ENCODE measurements at regions of chr6 and their contacts with region 1.

Region 1: DNA sequence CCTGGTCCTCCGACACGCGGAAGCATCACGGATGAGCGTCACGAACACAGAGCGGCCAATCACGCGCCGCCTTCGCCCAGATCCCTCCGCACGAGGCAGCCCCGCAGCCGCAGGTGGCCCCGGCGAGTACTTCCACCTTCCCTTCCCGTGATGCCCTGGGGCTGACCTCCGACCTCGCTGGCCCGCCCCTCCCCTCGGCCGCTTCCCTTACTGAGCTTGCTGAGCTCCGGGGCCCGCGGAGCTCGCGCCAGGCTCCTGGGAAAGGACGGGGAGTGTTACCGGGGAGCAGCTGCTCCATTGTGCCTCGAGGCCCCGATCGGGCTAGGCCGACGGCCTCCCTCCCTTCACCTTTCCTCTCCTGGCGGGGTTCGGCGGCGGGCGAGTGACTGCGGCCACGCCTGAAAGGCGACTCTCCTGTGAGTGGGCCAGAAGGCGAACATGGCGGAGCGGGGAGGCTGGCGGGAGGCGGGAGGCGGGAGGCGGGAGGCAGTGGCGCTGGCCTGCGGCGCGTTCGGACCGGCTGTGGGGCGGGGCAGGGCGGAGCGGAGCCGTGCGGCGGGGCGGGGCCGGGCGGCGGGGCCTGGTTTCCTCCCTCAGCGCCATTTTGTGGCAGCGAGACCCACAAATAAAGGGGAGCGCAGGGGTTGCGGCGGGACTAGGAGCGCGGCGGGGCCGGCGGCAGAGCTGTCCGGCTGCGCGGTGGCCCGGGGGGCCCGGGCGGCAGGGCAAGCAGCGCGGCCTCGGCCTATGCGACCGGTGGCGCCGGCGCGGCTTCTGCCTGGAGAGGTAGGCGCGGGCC is at the start of gene WTAP:
- DNase-seq: peak; percentile 98
- H3K4me3 ChIP-seq: peak within 1 kb of the TSS; percentile 96
- H3K4me3 Mint-ChIP-seq: peak within 1 kb of the TSS; percentile 97
- H3K27ac Mint-ChIP-seq: peak within 1 kb of the TSS; percentile 96
- H3K4me1 ChIP-seq: peaks cover 3% of the 10 kb centered on the region; the same call in 1 of the 2 replicates
- H3K4me1 Mint-ChIP-seq: peaks cover 6% of the 10 kb centered on the region
- H3K27me3 ChIP-seq: no peaks in the 10 kb centered on the region
- H3K27me3 Mint-ChIP-seq: no peaks in the 10 kb centered on the region
- CTCF ChIP-seq: no peak
- total RNA-seq, gene WTAP: 109 and 114 TPM in 2 replicates

Region 2: DNA sequence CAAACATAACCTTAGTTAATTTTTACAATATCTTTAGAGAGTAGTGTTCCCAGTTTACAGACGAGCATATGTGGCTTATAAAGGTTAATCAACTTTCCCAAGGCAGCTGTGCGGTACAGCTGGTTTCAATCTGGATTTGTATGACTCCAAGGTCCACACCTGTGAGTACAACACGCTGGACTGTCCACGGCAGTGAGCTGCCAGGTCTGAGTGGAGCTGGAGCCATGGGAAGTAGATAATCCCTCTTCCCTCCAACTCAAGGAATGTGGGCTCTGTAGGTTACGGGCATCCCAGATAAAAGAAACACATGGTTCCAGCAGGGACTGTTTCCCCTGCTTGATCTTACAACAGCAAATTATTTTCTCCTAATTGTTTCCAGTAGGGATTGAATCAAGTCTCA is 136.3 kb before region 1 on chr6:
- CTCF ChIA-PET with region 1: no interaction called
- POLR2A ChIA-PET with region 1: no interaction called
- intact Hi-C with region 1: no loop called
- DNase-seq: no peak
- H3K4me3 ChIP-seq: no peak overlapping the region
- H3K4me3 Mint-ChIP-seq: no peak overlapping the region
- H3K27ac Mint-ChIP-seq: no peak overlapping the region
- H3K4me1 ChIP-seq: no peaks in the 10 kb centered on the region
- H3K4me1 Mint-ChIP-seq: no peaks in the 10 kb centered on the region
- H3K27me3 ChIP-seq: peaks cover 1% of the 10 kb centered on the region
- H3K27me3 Mint-ChIP-seq: peaks cover 18% of the 10 kb centered on the region
- CTCF ChIP-seq: no peak

Region 3: DNA sequence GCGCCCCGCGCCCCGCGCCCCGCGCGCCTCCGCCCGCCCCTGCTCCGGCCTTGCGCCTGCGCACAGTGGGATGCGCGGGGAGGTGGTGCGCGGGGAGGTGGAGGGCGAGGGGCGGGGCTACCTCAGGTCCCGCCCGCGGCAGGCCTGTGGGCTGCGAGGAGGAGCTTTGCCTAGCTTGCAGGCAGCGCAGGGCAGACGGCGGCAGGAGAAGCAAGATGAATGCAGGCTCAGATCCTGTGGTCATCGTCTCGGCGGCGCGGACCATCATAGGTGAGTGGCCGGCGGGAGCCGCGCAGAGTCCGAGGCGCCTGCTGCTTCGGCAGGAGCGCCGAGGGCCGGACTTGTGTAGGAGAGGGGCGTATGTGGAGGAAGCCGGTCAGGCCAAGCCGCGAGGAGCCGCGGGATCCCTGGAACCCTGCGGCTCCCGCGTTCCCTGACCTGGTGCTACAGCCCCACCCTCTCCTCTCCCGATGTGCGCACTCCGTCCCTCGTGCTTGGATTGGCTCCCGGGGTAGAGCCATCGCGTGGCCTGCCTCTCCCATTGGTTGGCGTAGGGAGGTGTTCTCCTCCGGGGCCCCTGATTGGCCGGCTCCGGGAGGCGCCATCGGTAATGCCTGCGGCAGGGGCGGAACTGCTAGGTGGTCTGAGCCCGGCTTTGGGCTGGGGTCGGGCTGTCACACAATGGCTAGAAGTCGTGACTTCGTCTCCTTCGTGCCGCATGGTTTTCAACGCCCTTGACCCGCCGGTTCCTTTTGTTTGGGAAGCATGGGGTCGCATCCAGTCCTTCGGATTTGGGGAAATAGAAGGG is 35.0 kb after region 1 on chr6 and contains the start of gene ACAT2:
- CTCF ChIA-PET with region 1: no interaction called
- POLR2A ChIA-PET with region 1: interaction called, 35 read pairs
- intact Hi-C with region 1: loop called (anchors 1 kb)
- DNase-seq: peak; percentile 96 to 98
- H3K4me3 ChIP-seq: peak within 1 kb of the TSS; percentile 84
- H3K4me3 Mint-ChIP-seq: peak within 1 kb of the TSS; percentile 82
- H3K27ac Mint-ChIP-seq: peak within 1 kb of the TSS; percentile 98
- H3K4me1 ChIP-seq: peaks cover 16% of the 10 kb centered on the region
- H3K4me1 Mint-ChIP-seq: peaks cover 37% of the 10 kb centered on the region
- H3K27me3 ChIP-seq: no peaks in the 10 kb centered on the region
- H3K27me3 Mint-ChIP-seq: no peaks in the 10 kb centered on the region
- CTCF ChIP-seq: no peak
- total RNA-seq, gene ACAT2: 122 and 131 TPM in 2 replicates

Region 4: DNA sequence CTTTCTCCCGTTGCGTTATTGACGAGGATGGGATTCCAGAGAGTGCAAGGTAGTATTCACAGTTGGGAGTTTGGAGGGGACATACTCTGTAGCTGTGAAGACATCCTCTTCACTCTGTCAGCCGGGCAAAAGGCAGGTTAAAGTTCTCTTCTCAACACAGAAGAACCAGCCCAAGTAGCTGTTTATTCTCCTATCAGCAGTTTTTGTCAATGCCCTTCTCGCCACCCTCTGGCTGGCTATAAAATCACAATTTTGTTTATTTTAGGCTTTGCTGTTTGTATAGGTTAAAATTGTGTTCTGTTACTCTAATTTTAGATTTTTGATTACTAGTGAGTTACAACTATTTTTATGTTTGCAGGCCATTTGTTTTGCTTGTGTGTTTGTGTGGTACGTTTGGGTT is 125.8 kb after region 1 on chr6:
- CTCF ChIA-PET with region 1: no interaction called
- POLR2A ChIA-PET with region 1: no interaction called
- intact Hi-C with region 1: no loop called
- DNase-seq: peak in 1 of 2 experiments; percentile 32
- H3K4me3 ChIP-seq: no peak overlapping the region
- H3K4me3 Mint-ChIP-seq: no peak overlapping the region
- H3K27ac Mint-ChIP-seq: no peak overlapping the region
- H3K4me1 ChIP-seq: no peaks in the 10 kb centered on the region
- H3K4me1 Mint-ChIP-seq: no peaks in the 10 kb centered on the region
- H3K27me3 ChIP-seq: no peaks in the 10 kb centered on the region
- H3K27me3 Mint-ChIP-seq: peaks cover 8% of the 10 kb centered on the region
- CTCF ChIP-seq: peak in 1 of 2 experiments; percentile 21